HepG2 (cell line): ENCODE measurements at regions of chr1 and their contacts with region 1.

Region 1: DNA sequence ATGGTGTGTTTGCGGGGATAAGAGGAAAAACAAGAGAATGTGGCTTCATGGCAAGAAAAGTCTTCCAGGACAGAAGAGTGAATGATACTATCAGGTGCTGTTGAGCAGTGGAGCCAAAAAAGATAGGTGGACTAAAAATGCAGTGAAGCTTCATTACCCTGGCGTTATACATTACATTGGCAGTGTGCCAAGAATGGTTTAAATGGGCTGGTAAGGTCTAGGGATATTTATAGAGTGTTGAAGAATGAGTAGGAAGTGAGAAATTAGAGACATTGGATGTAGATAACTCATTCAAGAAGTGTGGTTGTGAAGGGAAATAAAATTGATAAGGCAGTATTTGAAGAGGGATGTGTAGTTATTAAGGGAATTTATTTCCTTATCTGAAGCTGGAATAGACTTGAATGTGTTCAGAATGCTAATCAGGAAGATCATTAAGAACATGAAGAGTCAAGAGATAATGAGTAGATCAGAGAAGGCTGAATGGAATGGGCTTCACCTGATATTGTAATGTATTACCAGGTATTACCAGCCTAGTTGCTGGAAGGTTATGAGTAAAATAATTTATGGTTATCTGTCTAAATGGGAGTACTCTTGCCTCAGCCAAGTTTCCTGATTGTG is 72.7 kb downstream of the MAST2 start:
- DNase-seq: no peak
- ATAC-seq: no peak
- H3K4me3 ChIP-seq: no peak overlapping the region
- H3K27ac ChIP-seq: no peak overlapping the region
- H3K4me1 ChIP-seq: peaks cover 57% of the 10 kb centered on the region
- H3K27me3 ChIP-seq: no peaks in the 10 kb centered on the region
- CTCF ChIP-seq: no peak
- EP300 ChIP-seq: no peak
- POLR2A ChIP-seq: no peak
- RAD21 ChIP-seq: no peak

Region 2: GRCh38 chr1:45730475-45731339 is 145.4 kb before region 1 on chr1:
- CTCF ChIA-PET with region 1: no interaction called
- POLR2A ChIA-PET with region 1: no interaction called
- in situ Hi-C with region 1: no loop called
- intact Hi-C with region 1: no loop called
- DNase-seq: no peak
- ATAC-seq: no peak
- H3K4me3 ChIP-seq: no peak overlapping the region
- H3K27ac ChIP-seq: no peak overlapping the region
- H3K4me1 ChIP-seq: no peaks in the 10 kb centered on the region
- H3K27me3 ChIP-seq: no peaks in the 10 kb centered on the region
- CTCF ChIP-seq: no peak
- EP300 ChIP-seq: no peak
- POLR2A ChIP-seq: no peak
- RAD21 ChIP-seq: no peak

Region 3: GRCh38 chr1:45824607-45825006 is 51.5 kb before region 1 on chr1:
- CTCF ChIA-PET with region 1: no interaction called
- POLR2A ChIA-PET with region 1: no interaction called
- in situ Hi-C with region 1: loop called (anchors 5 kb)
- intact Hi-C with region 1: no loop called
- DNase-seq: no peak
- ATAC-seq: no peak
- H3K4me3 ChIP-seq: no peak overlapping the region
- H3K27ac ChIP-seq: no peak overlapping the region
- H3K4me1 ChIP-seq: peaks cover 53% of the 10 kb centered on the region
- H3K27me3 ChIP-seq: no peaks in the 10 kb centered on the region
- CTCF ChIP-seq: peak; percentile 34
- EP300 ChIP-seq: no peak
- POLR2A ChIP-seq: no peak
- RAD21 ChIP-seq: no peak

Region 4: GRCh38 chr1:45887156-45887842 is 11.2 kb after region 1 on chr1:
- CTCF ChIA-PET with region 1: no interaction called
- POLR2A ChIA-PET with region 1: no interaction called
- in situ Hi-C with region 1: no loop called
- intact Hi-C with region 1: no loop called
- DNase-seq: peak; percentile 47
- ATAC-seq: peak; percentile 65
- H3K4me3 ChIP-seq: no peak overlapping the region
- H3K27ac ChIP-seq: peak overlapping the region; percentile 21
- H3K4me1 ChIP-seq: peaks cover 50% of the 10 kb centered on the region
- H3K27me3 ChIP-seq: no peaks in the 10 kb centered on the region
- CTCF ChIP-seq: no peak
- EP300 ChIP-seq: peak in 1 of 2 experiments; percentile 14; a peak in 1 of 4 replicates
- POLR2A ChIP-seq: no peak
- RAD21 ChIP-seq: no peak